ENCODE measurements at regions of chr15 and their contacts with region 1.

Region 1: GRCh38 chr15:40906091-40906990 is 12.1 kb downstream of the VPS18 start:
- DNase-seq: peak; percentile 55
- H3K4me3 Mint-ChIP-seq: no peak overlapping the region
- H3K27ac Mint-ChIP-seq: no peak overlapping the region
- H3K4me1 Mint-ChIP-seq: peaks cover 21% of the 10 kb centered on the region
- H3K27me3 Mint-ChIP-seq: no peaks in the 10 kb centered on the region

Region 2: GRCh38 chr15:40150163-40150925 is 756.0 kb before region 1 on chr15:
- intact Hi-C with region 1: no loop called
- DNase-seq: no peak
- H3K4me3 Mint-ChIP-seq: no peak overlapping the region
- H3K27ac Mint-ChIP-seq: no peak overlapping the region
- H3K4me1 Mint-ChIP-seq: no peaks in the 10 kb centered on the region
- H3K27me3 Mint-ChIP-seq: peaks cover 14% of the 10 kb centered on the region

Region 3: GRCh38 chr15:40952901-40953712 is 46.8 kb after region 1 on chr15 and contains the start of gene CHAC1:
- intact Hi-C with region 1: loop called (anchors 1 kb)
- DNase-seq: peak; percentile 96
- H3K4me3 Mint-ChIP-seq: peak within 1 kb of the TSS; percentile 92
- H3K27ac Mint-ChIP-seq: peak within 1 kb of the TSS; percentile 89
- H3K4me1 Mint-ChIP-seq: peaks cover 48% of the 10 kb centered on the region
- H3K27me3 Mint-ChIP-seq: no peaks in the 10 kb centered on the region
- total RNA-seq, gene CHAC1: 11.7 and 12.4 TPM in 2 replicates

Region 4: GRCh38 chr15:41022487-41023090 is 116.2 kb after region 1 on chr15:
- intact Hi-C with region 1: loop called (anchors 1 kb)
- DNase-seq: peak; percentile 16
- H3K4me3 Mint-ChIP-seq: no peak overlapping the region
- H3K27ac Mint-ChIP-seq: no peak overlapping the region
- H3K4me1 Mint-ChIP-seq: peaks cover 13% of the 10 kb centered on the region
- H3K27me3 Mint-ChIP-seq: no peaks in the 10 kb centered on the region

Measured in activated T-helper 1 cell treated with anti-CD3 and anti-CD28 coated beads, Interleukin-12 subunit alpha, Interleukin-12 subunit beta, Interleukin-2, Interleukin-4 antibody, amounts not matched to agents 30 ng/mL and 10 ng/mL and 1 ng/mL, durations not matched to agents 14 hours and 24 hours and 36 hours (primary cell).